ENCODE measurements at regions of chr22 and their contacts with region 1.

Region 1: GRCh38 chr22:36856121-36856791 is 4.5 kb upstream of the NCF4 start:
- DNase-seq: peak; percentile 62
- H3K27ac ChIP-seq: no peak overlapping the region
- CTCF ChIP-seq: peak; percentile 98

Region 2: DNA sequence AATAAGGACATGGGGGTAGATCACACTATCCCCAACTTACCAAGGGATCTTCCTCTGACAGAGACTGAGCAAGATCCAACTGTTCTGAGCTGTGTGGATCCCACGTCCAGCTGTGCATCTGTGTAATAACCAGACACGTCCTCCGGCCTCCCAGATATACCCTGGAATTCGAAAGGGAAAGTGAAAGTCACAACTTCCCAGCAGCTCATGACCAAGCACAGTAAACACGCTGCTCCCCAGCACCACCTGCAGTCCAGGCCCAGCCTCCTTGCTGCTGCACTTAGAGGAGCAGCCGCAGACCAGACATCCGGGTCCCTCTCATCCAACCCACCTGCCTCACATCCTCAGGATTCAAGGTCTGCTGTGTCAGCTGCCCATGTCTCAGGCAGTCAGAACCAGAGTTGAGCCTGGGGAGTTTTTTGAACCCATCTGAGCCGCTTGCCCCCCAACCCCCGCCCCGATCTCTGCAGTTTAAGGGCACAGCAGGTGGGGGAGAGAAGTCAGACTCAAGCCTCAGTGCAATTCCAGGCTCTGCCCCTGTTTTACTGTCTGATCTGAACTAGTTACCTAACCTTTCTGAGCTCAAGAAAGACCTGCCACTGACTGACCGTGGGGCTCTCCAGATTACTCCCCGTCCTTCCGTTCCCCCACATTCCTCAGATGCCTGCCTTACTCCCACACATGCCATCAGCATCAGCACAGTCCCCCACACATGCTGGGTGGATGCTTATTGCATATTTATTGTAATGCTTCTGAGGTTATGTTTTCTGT is 616.7 kb before region 1 on chr22 and contains the start of gene APOL2:
- CTCF ChIA-PET with region 1: no interaction called
- POLR2A ChIA-PET with region 1: no interaction called
- DNase-seq: peak; percentile 86
- H3K27ac ChIP-seq: peak within 1 kb of the TSS; percentile 89
- CTCF ChIP-seq: peak; percentile 79

Region 3: DNA sequence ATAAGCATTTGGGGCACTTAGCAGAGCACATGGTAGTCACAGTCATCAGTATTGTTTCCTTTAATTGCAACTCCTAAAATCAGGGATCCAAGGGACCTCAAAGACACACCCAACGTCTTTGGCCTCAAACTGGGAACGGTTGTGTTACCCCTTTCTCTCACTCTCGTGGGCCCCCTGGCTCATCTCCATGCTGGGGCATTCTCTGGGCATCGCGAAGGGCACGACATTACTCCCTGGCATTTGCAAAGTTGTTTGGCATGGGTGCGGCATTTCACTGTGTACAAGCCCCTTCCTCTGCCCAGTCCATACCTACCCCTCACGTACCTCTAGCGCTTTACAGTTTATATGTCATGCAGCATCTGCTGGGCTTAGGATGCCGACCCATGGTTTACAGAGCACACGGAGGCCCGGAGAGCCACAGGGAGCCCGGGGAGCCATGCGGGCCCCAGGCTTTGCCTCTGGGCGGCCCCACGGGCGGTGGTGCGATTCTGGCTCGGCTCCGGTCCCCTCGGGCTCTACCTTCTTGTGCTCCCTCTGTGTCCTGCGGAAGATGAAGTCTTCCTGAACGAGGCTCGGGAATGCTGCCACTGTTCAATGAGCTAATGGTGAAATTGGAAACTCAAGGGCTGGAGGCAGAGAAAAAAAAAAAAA is 130.8 kb before region 1 on chr22:
- CTCF ChIA-PET with region 1: no interaction called
- POLR2A ChIA-PET with region 1: no interaction called
- DNase-seq: no peak
- H3K27ac ChIP-seq: no peak overlapping the region
- CTCF ChIP-seq: no peak

Region 4: DNA sequence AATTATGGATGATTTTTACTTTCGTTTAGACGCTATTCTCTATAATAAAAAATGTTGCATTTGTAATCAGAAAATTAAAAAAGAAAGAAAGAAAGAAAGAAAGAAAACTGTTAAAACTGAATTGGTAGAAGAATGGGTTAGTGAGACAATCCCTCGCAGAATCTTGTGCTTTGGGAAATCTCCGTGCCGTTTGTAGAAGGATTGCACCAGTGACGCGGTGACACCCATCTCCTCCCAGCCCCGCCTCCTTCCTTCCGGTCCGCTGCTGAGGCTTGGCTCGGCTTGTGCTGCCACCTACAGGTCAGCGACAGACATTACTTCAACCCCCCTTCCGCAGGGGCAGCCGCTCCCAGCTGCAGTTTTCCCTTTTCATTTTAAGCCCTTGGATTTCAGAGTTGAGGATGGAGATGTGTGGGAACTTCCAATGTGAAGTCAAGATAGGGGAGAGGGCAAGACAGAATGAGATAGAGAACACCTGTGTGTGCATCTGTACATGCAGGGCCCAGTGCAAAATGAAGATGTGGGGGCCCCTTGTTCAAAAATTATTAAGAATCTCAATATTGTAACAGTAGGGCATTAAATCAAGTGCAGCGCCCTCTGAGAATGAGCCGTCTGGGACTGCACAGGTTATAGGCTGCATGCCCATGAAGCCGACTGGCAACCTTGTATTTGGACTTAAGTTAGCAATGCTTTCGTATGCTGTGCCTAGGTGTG is 121.8 kb after region 1 on chr22:
- CTCF ChIA-PET with region 1: interaction called, 11 read pairs
- POLR2A ChIA-PET with region 1: no interaction called
- DNase-seq: peak; percentile 91
- H3K27ac ChIP-seq: no peak overlapping the region
- CTCF ChIP-seq: peak; percentile 93